Kidney (tissue), 22 donors: ENCODE measurements at regions of chr5 and their contacts with region 1.

Region 1: GRCh38 chr5:137778772-137779564 is 24.8 kb upstream of the HNRNPA0 start:
- DNase-seq: peak in 2 of 5 donors; percentile 56 to 83
- H3K4me3 ChIP-seq: no peak overlapping the region
- H3K27ac ChIP-seq: no peak overlapping the region
- H3K4me1 ChIP-seq: no peaks in the 10 kb centered on the region
- H3K27me3 ChIP-seq: no peaks in the 10 kb centered on the region
- CTCF ChIP-seq: peak; percentile 78

Region 2: DNA sequence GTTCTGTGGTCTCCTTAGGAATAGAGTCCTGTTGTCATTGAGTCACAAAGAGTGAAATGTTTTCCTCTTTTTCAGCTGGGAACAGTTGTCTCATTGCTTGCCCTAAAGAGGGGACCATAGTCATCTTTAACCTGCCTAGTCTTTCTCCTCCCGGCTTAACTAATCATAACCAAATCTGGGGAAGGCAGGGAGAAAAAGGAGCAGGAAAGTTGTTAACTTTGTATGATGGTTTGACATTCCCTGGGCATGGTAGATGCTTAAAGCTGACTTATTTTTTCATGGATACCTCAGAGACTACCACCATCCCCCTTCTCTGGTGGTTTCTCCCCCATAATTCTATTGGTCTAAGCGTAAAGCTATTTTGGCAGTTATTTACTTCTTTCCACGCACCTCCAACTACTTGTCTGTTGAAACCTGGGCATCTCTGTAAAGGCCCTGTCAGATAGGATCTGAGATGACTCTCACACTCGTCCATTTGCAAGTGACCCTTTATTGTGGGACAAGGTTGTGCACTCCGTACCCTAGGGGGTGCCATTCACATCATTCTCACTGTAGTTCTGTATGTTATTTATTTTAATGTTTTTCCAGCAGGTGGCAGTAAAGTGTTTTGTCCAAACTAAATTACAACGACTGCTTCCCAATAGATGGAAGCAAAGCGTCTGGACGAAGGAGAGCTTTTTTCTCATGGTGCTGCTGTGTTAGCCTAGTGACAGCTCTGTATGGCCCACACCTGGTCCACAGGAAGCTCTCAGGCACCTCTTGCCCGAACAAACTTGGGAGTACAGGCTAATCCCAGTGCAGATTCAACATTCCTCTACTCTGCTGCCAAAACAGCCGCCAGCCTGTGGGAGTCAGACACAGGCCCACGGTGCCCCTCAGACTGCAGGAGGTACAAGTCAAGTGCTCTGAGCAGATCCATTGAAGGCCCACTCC is 256.9 kb after region 1 on chr5:
- intact Hi-C with region 1: loop called (anchors 10 kb)
- DNase-seq: peak in 4 of 5 donors; percentile 73 to 97 (median 83)
- H3K4me3 ChIP-seq: no peak overlapping the region
- H3K27ac ChIP-seq: no peak overlapping the region
- H3K4me1 ChIP-seq: peaks cover 0 to 10% (median 10%) of the 10 kb centered on the region in 3 donors
- H3K27me3 ChIP-seq: no peaks in the 10 kb centered on the region
- CTCF ChIP-seq: peak; percentile 79